ENCODE measurements at regions of chr20 and their contacts with region 1.

Region 1: GRCh38 chr20:63864847-63865640 is at the start of gene TPD52L2:
- DNase-seq: peak; percentile 99
- H3K4me3 Mint-ChIP-seq: peak within 1 kb of the TSS; percentile 89
- H3K27ac Mint-ChIP-seq: peak within 1 kb of the TSS; percentile 94
- H3K4me1 Mint-ChIP-seq: peaks cover 30% of the 10 kb centered on the region
- H3K27me3 Mint-ChIP-seq: no peaks in the 10 kb centered on the region
- total RNA-seq, gene TPD52L2: 39.6 to 41.6 TPM

Region 2: GRCh38 chr20:63707549-63708300 is 157.3 kb before region 1 on chr20 and contains the starts of genes ARFRP1 and ZGPAT:
- CTCF ChIA-PET with region 1: interaction called, 20 read pairs
- POLR2A ChIA-PET with region 1: no interaction called
- DNase-seq: peak; percentile 88
- H3K4me3 Mint-ChIP-seq: peak within 1 kb of the TSS; percentile 89
- H3K27ac Mint-ChIP-seq: peak within 1 kb of the TSS; percentile 87
- H3K4me1 Mint-ChIP-seq: peaks cover 50% of the 10 kb centered on the region
- H3K27me3 Mint-ChIP-seq: no peaks in the 10 kb centered on the region
- total RNA-seq, gene ARFRP1: 52.7 to 64.5 TPM
- total RNA-seq, gene ZGPAT: 37.3 to 43.3 TPM

Region 3: GRCh38 chr20:63819224-63819921 is 45.7 kb before region 1 on chr20:
- CTCF ChIA-PET with region 1: no interaction called
- POLR2A ChIA-PET with region 1: no interaction called
- DNase-seq: no peak
- H3K4me3 Mint-ChIP-seq: no peak overlapping the region
- H3K27ac Mint-ChIP-seq: no peak overlapping the region
- H3K4me1 Mint-ChIP-seq: no peaks in the 10 kb centered on the region
- H3K27me3 Mint-ChIP-seq: peaks cover 3% of the 10 kb centered on the region

Region 4: DNA sequence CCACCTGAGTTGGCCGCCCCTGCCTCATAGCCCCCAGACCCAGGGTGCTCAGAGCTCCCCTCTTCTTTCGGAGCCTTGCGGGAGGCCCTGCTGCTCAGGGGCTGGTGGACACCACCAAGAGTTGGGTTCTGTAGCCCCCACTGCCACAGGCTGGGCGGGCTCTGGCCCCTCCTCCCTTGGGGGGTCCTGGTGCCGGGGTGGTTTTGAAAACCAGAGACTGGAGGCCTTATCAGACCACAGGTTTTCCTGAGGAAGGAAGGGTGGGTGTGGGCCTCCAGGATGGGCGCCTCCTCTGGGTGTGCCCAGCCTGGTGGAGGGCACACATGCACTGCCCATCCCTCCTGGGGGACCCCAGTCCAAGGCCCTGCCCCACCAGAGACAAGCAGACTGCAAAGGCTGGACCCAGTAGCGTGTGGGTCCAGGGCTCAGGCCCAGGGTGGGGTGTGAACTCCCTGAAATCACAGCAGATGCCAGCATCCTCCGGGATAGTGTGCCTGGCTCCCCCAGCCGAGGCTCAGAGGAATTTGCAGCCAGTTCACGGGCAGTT is 20.5 kb before region 1 on chr20:
- CTCF ChIA-PET with region 1: no interaction called
- POLR2A ChIA-PET with region 1: no interaction called
- DNase-seq: no peak
- H3K4me3 Mint-ChIP-seq: no peak overlapping the region
- H3K27ac Mint-ChIP-seq: no peak overlapping the region
- H3K4me1 Mint-ChIP-seq: peaks cover 17% of the 10 kb centered on the region
- H3K27me3 Mint-ChIP-seq: peaks cover 37% of the 10 kb centered on the region

Region 5: GRCh38 chr20:64001607-64002011 is 136.6 kb after region 1 on chr20:
- CTCF ChIA-PET with region 1: no interaction called
- POLR2A ChIA-PET with region 1: no interaction called
- DNase-seq: no peak
- H3K4me3 Mint-ChIP-seq: no peak overlapping the region
- H3K27ac Mint-ChIP-seq: no peak overlapping the region
- H3K4me1 Mint-ChIP-seq: no peaks in the 10 kb centered on the region
- H3K27me3 Mint-ChIP-seq: no peaks in the 10 kb centered on the region